ENCODE measurements at regions of chr1 and their contacts with region 1.

Region 1: GRCh38 chr1:225923692-225924555 is at the start of gene PYCR2:
- DNase-seq: peak; percentile 91
- ATAC-seq: peak; percentile 97
- H3K4me3 ChIP-seq: peak within 1 kb of the TSS; percentile 81 to 94 (median 82)
- H3K27ac ChIP-seq: peak within 1 kb of the TSS; percentile 89
- H3K4me1 ChIP-seq: peaks cover 22% of the 10 kb centered on the region
- H3K27me3 ChIP-seq: no peaks in the 10 kb centered on the region; a peak in 2 of 5 replicates
- CTCF ChIP-seq: peak; percentile 33; the same call in 1 of the 2 replicates
- EP300 ChIP-seq: no peak
- POLR2A ChIP-seq: peak; percentile 52 to 96
- RAD21 ChIP-seq: no peak
- total RNA-seq, gene PYCR2: 47.8 and 49.5 TPM in 2 replicates

Region 2: DNA sequence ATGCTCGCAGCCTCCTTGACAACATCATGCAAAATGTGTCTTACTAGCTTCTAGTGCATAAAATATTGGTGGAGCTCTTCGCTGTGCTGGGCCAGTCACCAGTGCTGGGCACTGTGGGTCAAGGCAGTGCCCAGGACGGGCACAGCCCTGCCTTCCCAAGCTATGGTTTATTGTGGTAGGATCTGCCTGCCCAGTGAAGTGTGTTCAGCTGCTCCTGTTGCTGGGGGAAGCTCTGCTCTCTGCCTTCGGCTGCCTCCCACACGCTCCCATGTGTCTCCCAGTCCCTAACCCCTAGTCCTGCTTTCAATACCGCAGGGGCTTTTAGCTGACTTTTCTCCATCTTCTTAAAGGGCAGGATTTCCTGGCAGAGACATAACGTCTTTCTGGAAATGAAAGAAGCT is 98.3 kb before region 1 on chr1:
- CTCF ChIA-PET with region 1: no interaction called
- POLR2A ChIA-PET with region 1: no interaction called
- in situ Hi-C with region 1: no loop called
- intact Hi-C with region 1: loop called (anchors 10 kb)
- DNase-seq: no peak
- ATAC-seq: peak; percentile 26
- H3K4me3 ChIP-seq: peak overlapping the region in 1 of 3 experiments; percentile 41; a peak in 1 of 6 replicates
- H3K27ac ChIP-seq: peak overlapping the region; percentile 60
- H3K4me1 ChIP-seq: peaks cover 70% of the 10 kb centered on the region
- H3K27me3 ChIP-seq: no peaks in the 10 kb centered on the region
- CTCF ChIP-seq: no peak
- EP300 ChIP-seq: no peak
- POLR2A ChIP-seq: no peak
- RAD21 ChIP-seq: no peak

Region 3: DNA sequence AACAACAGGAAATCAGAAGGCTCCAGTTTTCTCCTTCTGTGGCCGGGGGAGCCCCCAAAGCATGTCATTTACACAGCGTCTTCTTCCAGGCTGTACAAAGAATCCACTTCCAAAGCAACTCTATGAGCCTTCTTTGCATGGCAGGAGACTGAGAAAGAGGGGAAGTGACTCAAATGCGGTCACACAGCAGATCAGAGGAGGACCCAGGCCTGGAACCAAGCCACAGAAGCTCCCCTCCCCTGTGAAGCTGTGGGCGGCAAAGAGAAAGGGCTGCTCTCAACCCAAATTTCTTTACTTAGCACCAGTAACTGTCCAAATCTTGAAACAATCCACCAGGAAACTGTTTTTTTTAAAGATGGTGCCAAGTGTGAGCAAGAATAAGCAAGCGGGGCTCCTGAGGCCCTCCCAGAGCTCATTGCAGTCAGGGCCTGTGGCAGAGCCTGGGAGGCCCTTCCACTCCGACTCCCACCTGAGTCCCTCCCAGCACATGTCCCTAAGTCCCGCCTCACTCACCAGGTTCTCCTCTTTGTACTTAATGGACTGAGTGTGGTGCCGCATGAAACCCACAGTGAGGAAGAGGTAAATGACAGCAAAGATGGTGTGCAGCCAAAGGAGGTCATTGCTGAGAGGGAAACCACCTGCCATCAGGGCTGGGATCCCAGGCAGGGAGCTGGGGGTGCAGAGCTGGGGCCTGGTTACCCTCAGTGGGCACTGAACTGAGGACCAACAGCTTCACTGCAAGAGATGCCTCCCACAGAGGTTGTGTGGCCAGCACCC is 57.7 kb before region 1 on chr1:
- CTCF ChIA-PET with region 1: no interaction called
- POLR2A ChIA-PET with region 1: no interaction called
- in situ Hi-C with region 1: no loop called
- intact Hi-C with region 1: no loop called
- DNase-seq: no peak
- ATAC-seq: no peak
- H3K4me3 ChIP-seq: no peak overlapping the region
- H3K27ac ChIP-seq: no peak overlapping the region
- H3K4me1 ChIP-seq: peaks cover 12% of the 10 kb centered on the region
- H3K27me3 ChIP-seq: no peaks in the 10 kb centered on the region
- CTCF ChIP-seq: no peak
- EP300 ChIP-seq: no peak
- POLR2A ChIP-seq: no peak
- RAD21 ChIP-seq: no peak

Region 4: GRCh38 chr1:225896937-225897549 is 26.9 kb before region 1 on chr1:
- CTCF ChIA-PET with region 1: no interaction called
- POLR2A ChIA-PET with region 1: interaction called, 15 read pairs
- in situ Hi-C with region 1: no loop called
- intact Hi-C with region 1: no loop called
- DNase-seq: peak; percentile 68
- ATAC-seq: peak; percentile 94
- H3K4me3 ChIP-seq: peak overlapping the region in 2 of 3 experiments; percentile 9 to 46; a peak in 2 of 6 replicates
- H3K27ac ChIP-seq: no peak overlapping the region
- H3K4me1 ChIP-seq: peaks cover 40% of the 10 kb centered on the region
- H3K27me3 ChIP-seq: no peaks in the 10 kb centered on the region
- CTCF ChIP-seq: peak; percentile 33; the same call in 1 of the 2 replicates
- EP300 ChIP-seq: no peak
- POLR2A ChIP-seq: no peak
- RAD21 ChIP-seq: no peak

Region 5: DNA sequence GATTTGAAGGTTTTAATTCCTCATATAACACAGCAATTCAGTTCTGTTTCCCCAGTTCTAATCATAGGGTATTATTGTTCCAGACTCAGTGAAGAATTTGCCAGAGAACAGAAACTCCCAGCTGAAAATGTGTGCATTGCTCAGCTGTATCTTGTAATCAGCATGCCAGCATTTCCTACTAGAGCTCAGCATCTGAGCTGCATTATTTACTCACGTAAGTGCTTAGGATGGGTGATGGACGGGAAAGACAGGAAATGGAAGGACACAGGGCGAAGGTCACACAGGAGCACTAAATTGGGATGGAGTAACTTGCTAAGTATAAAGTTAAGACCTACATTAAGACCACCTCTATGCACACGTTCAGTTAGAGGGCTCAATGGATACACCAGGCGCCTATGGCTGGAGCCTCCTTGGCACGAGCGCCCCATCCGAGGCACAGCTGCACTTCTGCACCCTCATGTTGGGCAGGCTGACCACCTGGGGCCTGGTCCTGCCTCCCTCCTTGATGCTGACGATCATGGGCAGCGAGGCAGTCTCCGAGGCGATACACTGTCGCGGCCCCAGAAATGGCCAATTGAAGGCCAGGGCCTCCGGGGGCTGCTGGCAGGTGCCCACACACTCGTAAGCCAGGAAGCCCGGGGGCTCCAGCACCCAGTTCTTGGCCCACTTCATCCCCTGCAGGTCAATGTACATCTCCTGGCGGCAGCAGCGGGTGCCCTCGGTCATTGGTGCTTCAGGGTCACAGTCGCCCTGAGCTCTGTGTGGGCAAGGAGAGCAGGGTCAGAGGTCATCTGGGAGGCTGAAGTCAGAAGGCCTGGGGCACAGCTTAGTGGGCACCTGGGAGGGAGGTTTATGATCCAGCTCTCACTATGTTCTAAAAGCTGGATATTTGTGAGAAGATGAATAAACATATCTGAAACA is 13.4 kb after region 1 on chr1:
- CTCF ChIA-PET with region 1: no interaction called
- POLR2A ChIA-PET with region 1: interaction called, 16 read pairs
- in situ Hi-C with region 1: no loop called
- intact Hi-C with region 1: no loop called
- DNase-seq: no peak
- ATAC-seq: no peak
- H3K4me3 ChIP-seq: no peak overlapping the region
- H3K27ac ChIP-seq: no peak overlapping the region
- H3K4me1 ChIP-seq: peaks cover 44% of the 10 kb centered on the region
- H3K27me3 ChIP-seq: peaks cover 0 to 7% of the 10 kb centered on the region in 2 experiments; a peak in 1 of 5 replicates
- CTCF ChIP-seq: no peak
- EP300 ChIP-seq: no peak
- POLR2A ChIP-seq: no peak
- RAD21 ChIP-seq: no peak

Measured in HepG2 (cell line).